Testis (tissue), 5 donors: ENCODE measurements at regions of chr7 and their contacts with region 1.

Region 1: GRCh38 chr7:135801045-135801693 is 52.6 kb upstream of the FAM180A start:
- DNase-seq: peak; percentile 61
- H3K4me3 ChIP-seq: no peak overlapping the region
- H3K27ac ChIP-seq: peak overlapping the region; percentile 23 to 53
- H3K4me1 ChIP-seq: peaks cover 10% of the 10 kb centered on the region
- H3K27me3 ChIP-seq: no peaks in the 10 kb centered on the region
- CTCF ChIP-seq: peak; percentile 72 to 83 (median 83)
- POLR2A ChIP-seq: no peak

Region 2: DNA sequence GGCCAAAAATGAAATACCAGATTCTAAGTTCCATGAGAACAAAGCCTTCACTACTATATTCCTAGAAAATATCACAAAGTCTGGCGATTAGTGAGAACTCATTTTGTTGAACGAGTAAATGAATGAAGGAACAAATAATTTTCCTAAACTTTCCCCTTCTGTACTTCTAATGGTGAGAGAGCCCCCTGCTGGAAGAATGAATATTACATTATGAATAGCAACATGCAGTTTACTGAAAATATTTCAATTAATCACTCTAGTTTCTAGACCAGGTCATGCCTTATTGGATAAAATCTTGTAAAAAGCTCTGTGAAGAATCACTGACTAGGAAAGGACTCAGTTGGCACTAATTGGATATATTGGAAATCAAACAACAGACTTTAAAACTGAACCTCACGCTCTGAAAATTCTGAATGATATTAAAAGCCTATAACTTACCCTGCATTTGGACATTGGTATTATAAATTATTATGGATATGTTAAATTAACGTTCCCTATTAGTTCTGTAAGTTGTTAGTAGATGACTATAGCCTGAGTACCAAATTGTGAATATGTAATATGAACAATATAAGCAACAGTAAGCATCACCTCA is 208.4 kb after region 1 on chr7:
- intact Hi-C with region 1: loop called (anchors 5 kb)
- DNase-seq: no peak
- H3K4me3 ChIP-seq: no peak overlapping the region
- H3K27ac ChIP-seq: no peak overlapping the region
- H3K4me1 ChIP-seq: no peaks in the 10 kb centered on the region
- H3K27me3 ChIP-seq: no peaks in the 10 kb centered on the region
- CTCF ChIP-seq: peak; percentile 49 to 78 (median 55)
- POLR2A ChIP-seq: no peak